ENCODE measurements at regions of chr3 and their contacts with region 1.

Region 1: GRCh38 chr3:10855871-10856662 is 40.0 kb downstream of the SLC6A11 start:
- DNase-seq: peak; percentile 22
- ATAC-seq: peak; percentile 48
- H3K4me3 ChIP-seq: no peak overlapping the region
- H3K27ac ChIP-seq: peak overlapping the region; percentile 39
- H3K4me1 ChIP-seq: peaks cover 24% of the 10 kb centered on the region
- H3K27me3 ChIP-seq: no peaks in the 10 kb centered on the region
- CTCF ChIP-seq: no peak
- EP300 ChIP-seq: no peak
- POLR2A ChIP-seq: no peak
- RAD21 ChIP-seq: no peak

Region 2: DNA sequence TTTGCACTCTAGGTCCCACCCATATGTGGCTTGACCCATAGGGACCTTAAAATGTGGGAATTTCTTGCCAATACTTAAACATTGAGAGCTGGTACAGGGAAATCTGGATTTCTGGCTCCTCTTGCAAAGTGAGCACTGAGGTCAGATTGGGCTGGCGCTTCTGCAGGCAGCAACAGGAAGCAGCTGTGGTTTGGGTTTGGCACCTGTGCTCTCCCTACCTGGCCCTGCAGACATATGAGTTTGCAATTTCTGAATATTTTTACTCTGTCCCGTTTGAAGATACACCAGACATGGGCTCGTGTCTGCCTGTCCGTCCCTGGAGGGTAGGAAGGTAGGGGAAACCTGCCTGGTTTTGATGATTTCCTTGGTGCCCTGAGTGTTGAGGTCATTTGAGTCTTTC is 460.4 kb before region 1 on chr3:
- CTCF ChIA-PET with region 1: no interaction called
- POLR2A ChIA-PET with region 1: no interaction called
- in situ Hi-C with region 1: no loop called
- intact Hi-C with region 1: no loop called
- DNase-seq: no peak
- ATAC-seq: no peak
- H3K4me3 ChIP-seq: no peak overlapping the region
- H3K27ac ChIP-seq: no peak overlapping the region
- H3K4me1 ChIP-seq: no peaks in the 10 kb centered on the region
- H3K27me3 ChIP-seq: peaks cover 0 to 3% of the 10 kb centered on the region in 2 experiments; a peak in 1 of 5 replicates
- CTCF ChIP-seq: no peak
- EP300 ChIP-seq: no peak
- POLR2A ChIP-seq: no peak
- RAD21 ChIP-seq: no peak

Region 3: DNA sequence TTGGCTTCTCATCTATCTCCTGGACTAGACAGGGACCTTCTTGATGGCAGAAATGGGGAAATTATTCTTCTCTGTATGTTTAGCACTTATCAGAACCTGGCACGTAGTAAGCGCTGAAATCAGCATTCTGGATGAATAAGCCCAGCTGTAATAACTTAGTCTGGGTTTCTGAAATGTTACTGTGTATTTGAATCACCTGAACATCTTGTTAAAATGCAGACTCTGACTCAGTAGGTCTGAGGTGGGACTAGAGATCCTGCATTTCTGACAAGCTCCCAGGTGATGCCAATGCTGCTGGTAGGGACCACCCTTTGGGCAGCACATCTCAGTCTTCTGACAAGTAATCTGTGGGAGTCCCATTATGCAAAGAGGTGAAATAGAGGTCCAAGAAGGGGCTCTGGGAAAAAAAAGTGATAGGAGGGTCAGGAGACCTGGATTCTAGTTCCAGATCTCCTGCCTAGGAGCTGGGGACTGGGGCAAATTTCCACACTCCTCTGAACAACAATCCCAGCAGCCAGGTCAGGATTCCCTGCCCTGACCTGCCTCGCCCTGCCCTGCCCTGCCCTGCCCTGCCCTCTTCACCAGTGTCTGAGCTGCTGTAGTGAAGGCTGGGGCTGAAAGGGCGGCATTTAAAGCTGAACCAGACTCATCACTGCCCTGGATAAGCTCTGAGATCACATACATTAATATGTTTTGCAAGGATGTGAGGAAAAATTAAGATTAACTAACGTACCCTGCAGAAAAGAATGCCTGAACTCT is 57.3 kb before region 1 on chr3:
- CTCF ChIA-PET with region 1: no interaction called
- POLR2A ChIA-PET with region 1: no interaction called
- in situ Hi-C with region 1: no loop called
- intact Hi-C with region 1: no loop called
- DNase-seq: no peak
- ATAC-seq: no peak
- H3K4me3 ChIP-seq: no peak overlapping the region
- H3K27ac ChIP-seq: no peak overlapping the region
- H3K4me1 ChIP-seq: no peaks in the 10 kb centered on the region
- H3K27me3 ChIP-seq: no peaks in the 10 kb centered on the region; a peak in 2 of 5 replicates
- CTCF ChIP-seq: no peak
- EP300 ChIP-seq: no peak
- POLR2A ChIP-seq: no peak
- RAD21 ChIP-seq: no peak

Region 4: GRCh38 chr3:10835406-10835805 is 20.7 kb before region 1 on chr3:
- CTCF ChIA-PET with region 1: no interaction called
- POLR2A ChIA-PET with region 1: no interaction called
- in situ Hi-C with region 1: no loop called
- intact Hi-C with region 1: no loop called
- DNase-seq: peak; percentile 7
- ATAC-seq: peak; percentile 44
- H3K4me3 ChIP-seq: no peak overlapping the region
- H3K27ac ChIP-seq: no peak overlapping the region
- H3K4me1 ChIP-seq: no peaks in the 10 kb centered on the region
- H3K27me3 ChIP-seq: no peaks in the 10 kb centered on the region
- CTCF ChIP-seq: peak; percentile 33; the same call in 1 of the 2 replicates
- EP300 ChIP-seq: no peak
- POLR2A ChIP-seq: no peak
- RAD21 ChIP-seq: no peak

Region 5: DNA sequence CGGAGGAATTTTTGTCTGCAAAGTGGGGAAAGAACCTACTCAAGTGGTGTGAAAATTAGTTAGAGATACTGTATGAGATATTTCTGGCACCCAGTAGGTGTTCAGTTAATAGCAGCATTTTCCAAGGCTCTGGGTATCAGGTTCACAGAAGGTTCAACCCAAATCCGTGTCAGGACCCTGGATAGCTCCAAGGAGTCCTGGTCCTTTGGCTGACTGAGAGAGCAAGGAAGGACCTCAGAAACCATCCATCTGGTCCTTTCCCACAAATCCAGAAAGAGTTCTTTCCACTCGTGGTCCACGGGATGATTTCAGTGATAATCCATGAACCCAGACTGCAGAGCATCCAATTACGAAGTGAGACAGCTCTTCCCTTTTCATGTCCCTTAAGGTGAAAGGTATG is 11.3 kb after region 1 on chr3:
- CTCF ChIA-PET with region 1: no interaction called
- POLR2A ChIA-PET with region 1: no interaction called
- in situ Hi-C with region 1: no loop called
- intact Hi-C with region 1: no loop called
- DNase-seq: no peak
- ATAC-seq: no peak
- H3K4me3 ChIP-seq: no peak overlapping the region
- H3K27ac ChIP-seq: no peak overlapping the region
- H3K4me1 ChIP-seq: no peaks in the 10 kb centered on the region
- H3K27me3 ChIP-seq: no peaks in the 10 kb centered on the region
- CTCF ChIP-seq: no peak
- EP300 ChIP-seq: no peak
- POLR2A ChIP-seq: no peak
- RAD21 ChIP-seq: no peak

Region 6: DNA sequence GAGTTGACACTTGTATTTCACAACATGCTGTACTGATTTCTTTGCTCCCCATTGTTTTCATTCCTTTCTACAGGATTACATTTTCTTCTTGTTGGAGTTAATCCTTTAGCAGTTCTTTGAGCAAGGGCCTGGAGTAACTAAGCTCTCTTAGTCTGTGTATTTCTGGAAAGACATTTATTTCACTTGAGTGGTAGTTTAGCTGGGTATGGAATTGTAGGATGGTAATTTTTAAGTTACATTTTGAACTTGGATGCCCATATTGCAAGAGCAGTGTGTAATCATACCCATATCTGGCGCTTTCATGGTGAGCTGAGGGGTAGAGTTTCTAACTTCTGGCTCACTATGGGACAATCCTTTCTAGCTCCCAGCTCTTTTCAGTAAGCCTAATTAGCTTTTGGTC is 34.6 kb after region 1 on chr3:
- CTCF ChIA-PET with region 1: no interaction called
- POLR2A ChIA-PET with region 1: no interaction called
- in situ Hi-C with region 1: no loop called
- intact Hi-C with region 1: loop called (anchors 1 kb)
- DNase-seq: no peak
- ATAC-seq: no peak
- H3K4me3 ChIP-seq: no peak overlapping the region
- H3K27ac ChIP-seq: no peak overlapping the region
- H3K4me1 ChIP-seq: no peaks in the 10 kb centered on the region
- H3K27me3 ChIP-seq: no peaks in the 10 kb centered on the region
- CTCF ChIP-seq: no peak
- EP300 ChIP-seq: no peak
- POLR2A ChIP-seq: no peak
- RAD21 ChIP-seq: no peak